ENCODE measurements at regions of chr16 and their contacts with region 1.

Region 1: GRCh38 chr16:67151431-67152097 is 766 bp upstream of the B3GNT9 start:
- DNase-seq: no peak
- ATAC-seq: no peak
- H3K4me3 ChIP-seq: peak overlapping the region; percentile 56 to 75
- H3K27ac ChIP-seq: peak overlapping the region; percentile 82
- H3K4me1 ChIP-seq: peaks cover 8% of the 10 kb centered on the region
- H3K27me3 ChIP-seq: no peaks in the 10 kb centered on the region
- CTCF ChIP-seq: no peak

Region 2: DNA sequence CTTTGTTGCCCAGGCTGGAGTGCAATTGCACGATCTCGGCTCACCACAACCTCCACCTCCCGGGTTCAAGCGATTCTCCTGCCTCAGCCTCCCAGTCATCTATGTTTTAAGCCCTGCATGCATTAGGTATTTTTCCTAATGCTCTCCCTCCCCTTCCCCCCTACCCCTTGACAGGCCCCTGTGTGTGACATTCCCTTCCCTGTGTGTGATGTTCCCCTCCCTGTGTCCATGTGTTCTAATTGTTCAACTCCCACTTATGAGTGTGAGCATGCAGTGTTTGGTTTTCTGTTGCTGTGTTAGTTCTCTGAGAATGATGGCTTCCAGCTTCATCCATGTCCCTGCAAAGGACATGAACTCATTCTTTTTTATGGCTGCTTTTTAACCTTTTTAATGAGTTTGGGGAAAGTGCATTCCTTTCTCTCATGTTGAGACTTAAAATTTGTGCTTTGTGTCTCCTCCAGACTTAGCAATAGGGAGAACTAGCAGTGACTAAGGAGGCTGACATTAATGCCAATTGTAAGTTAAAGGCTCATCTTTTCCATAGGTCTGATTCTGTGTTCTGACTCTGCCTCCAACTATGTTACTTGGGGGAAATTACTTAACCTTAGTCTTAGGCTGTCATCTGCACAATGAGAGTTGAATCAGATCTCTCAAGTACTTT is 59.5 kb before region 1 on chr16:
- CTCF ChIA-PET with region 1: no interaction called
- POLR2A ChIA-PET with region 1: no interaction called
- in situ Hi-C with region 1: no loop called
- intact Hi-C with region 1: no loop called
- DNase-seq: no peak
- ATAC-seq: no peak
- H3K4me3 ChIP-seq: no peak overlapping the region
- H3K27ac ChIP-seq: no peak overlapping the region
- H3K4me1 ChIP-seq: no peaks in the 10 kb centered on the region
- H3K27me3 ChIP-seq: no peaks in the 10 kb centered on the region
- CTCF ChIP-seq: no peak

Region 3: DNA sequence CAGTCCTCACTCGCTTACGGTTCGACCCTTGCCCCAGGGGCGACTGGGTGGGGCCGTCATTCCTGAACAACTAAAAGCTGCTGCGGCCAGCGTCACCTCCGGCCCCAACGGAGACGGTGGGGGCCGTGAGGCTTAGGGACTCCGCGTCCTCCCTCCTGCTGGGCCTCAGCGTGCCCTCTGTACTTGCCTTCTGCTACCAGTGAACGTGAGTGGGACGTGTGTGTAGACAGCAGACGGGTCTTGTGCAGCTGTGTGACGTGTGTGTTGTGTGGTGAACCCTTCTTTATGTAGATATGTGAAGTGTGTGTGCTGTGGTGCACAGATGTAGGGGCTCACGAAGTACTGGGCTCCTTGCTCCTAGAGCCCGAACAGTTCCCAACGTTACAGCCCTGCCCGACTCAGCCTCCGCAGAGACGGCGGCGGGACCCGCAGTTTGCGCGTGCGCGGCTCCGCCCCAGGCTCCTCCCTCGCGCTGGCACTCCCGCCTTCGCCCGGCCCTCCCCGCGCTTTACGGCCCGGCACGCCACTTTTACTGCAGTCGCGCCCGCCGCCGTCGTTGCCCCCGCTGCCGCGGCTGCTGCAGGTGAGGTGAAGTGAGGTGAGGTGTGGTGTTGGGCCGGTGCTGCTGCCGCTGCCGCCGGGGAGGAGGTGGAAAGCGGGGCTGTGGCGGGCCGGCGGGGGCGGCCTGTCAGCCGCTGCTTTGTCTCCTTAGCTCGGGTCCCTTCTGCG is 42.0 kb before region 1 on chr16 and contains the start of gene PHAF1:
- CTCF ChIA-PET with region 1: no interaction called
- POLR2A ChIA-PET with region 1: interaction called, 11 read pairs
- in situ Hi-C with region 1: no loop called
- intact Hi-C with region 1: no loop called
- DNase-seq: no peak
- ATAC-seq: peak; percentile 93
- H3K4me3 ChIP-seq: peak within 1 kb of the TSS; percentile 82 to 91
- H3K27ac ChIP-seq: peak within 1 kb of the TSS; percentile 90
- H3K4me1 ChIP-seq: peaks cover 9% of the 10 kb centered on the region
- H3K27me3 ChIP-seq: no peaks in the 10 kb centered on the region
- CTCF ChIP-seq: no peak
- total RNA-seq, gene PHAF1: 15.7 TPM

Region 4: DNA sequence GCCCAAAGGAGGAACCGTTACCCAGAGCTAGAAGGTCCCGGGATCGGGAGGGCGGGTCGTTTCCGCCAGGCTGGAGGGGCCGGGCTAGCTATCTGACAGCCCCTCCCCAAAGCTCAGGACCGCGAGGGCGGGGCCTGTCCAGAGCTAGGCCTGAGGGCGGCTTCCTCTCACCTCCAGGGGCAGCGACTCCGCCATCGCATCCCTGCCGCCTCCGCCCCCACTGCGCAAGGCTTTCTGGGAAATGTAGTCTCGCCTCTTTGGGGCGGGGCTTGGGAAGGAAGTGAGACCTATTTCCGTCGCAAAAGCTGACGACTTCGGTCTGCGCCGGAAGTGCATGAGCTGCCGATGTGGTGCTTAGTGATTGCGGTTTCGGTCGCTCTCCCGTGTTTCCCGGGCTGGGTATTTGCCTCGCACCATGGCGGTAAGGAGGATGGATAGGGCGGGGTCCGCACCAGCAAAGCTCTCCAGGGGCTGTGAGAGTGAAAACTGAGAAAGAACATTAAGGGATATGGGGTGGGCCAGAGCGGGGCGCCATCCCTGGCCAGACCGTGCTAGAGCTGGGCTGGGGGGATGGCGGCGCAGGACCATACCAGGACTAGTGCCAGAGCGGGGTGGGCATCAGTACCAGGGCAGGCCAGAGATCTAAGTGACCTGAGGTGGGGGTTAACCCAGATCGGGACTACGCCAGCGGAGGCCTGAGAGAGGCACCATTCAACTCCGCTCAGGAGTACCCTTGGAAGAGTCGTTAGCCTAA is 75.4 kb after region 1 on chr16 and contains the start of gene TMEM208:
- CTCF ChIA-PET with region 1: no interaction called
- POLR2A ChIA-PET with region 1: no interaction called
- in situ Hi-C with region 1: no loop called
- intact Hi-C with region 1: no loop called
- DNase-seq: peak; percentile 84
- ATAC-seq: peak; percentile 96
- H3K4me3 ChIP-seq: peak within 1 kb of the TSS; percentile 67 to 99
- H3K27ac ChIP-seq: peak within 1 kb of the TSS; percentile 88
- H3K4me1 ChIP-seq: peaks cover 4% of the 10 kb centered on the region; the same call in 1 of the 2 replicates
- H3K27me3 ChIP-seq: no peaks in the 10 kb centered on the region
- CTCF ChIP-seq: no peak; the same call in 1 of the 2 replicates
- total RNA-seq, gene TMEM208: 25.6 TPM

Measured in Panc1 (cell line).